Natural killer cell (primary cell): ENCODE measurements at regions of chr3 and their contacts with region 1.

Region 1: DNA sequence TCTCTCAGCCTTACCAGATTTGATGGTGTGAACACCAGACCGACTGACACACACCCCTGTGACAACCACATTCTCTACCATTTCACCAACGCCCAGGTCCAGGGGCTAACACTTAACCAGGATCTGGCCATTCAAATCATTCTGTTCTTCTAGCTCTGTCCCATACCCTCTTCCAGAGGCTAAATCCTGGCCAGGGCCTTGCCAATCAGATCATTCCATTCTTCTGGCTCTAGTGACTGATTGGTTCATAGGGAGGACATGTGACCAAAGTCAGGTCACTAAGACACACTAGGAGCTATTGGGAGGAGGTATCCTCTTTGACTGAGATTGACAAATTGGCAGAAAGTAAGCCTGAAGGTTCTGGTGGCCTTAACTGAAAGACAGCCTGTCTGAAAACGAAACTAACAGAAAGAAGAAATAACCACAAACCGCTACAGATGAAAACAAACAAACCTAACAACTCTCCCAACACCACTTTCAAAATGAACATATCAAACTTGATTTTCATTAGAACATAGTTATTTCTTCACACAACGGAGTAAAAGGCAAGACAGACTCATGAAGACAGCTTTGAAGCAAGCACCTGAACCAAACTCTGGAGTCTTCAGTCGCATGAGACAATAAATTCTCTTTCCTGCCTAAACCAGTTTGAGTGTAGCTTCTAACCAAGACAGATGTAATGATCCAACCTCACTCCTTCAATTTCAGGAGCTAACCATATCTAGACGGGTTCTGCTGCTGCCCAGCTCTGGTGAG is 68.5 kb downstream of the TRANK1 start:
- DNase-seq: peak; percentile 49 to 81
- ATAC-seq: peak; percentile 81 to 88 (median 88)
- H3K4me3 ChIP-seq: peak overlapping the region; percentile 5
- H3K4me3 Mint-ChIP-seq: peak overlapping the region; percentile 86
- H3K27ac ChIP-seq: peak overlapping the region; percentile 95
- H3K27ac Mint-ChIP-seq: peak overlapping the region; percentile 93 to 95
- H3K4me1 ChIP-seq: peaks cover 34% of the 10 kb centered on the region
- H3K4me1 Mint-ChIP-seq: peaks cover 56 to 66% of the 10 kb centered on the region in 2 donors
- H3K27me3 ChIP-seq: no peaks in the 10 kb centered on the region
- H3K27me3 Mint-ChIP-seq: no peaks in the 10 kb centered on the region
- CTCF ChIP-seq: no peak

Region 2: GRCh38 chr3:36843065-36844051 is 33.0 kb before region 1 on chr3:
- intact Hi-C with region 1: loop called (anchors 1 kb)
- DNase-seq: peak; percentile 37 to 70
- ATAC-seq: peak; percentile 77 to 85 (median 81)
- H3K4me3 ChIP-seq: no peak overlapping the region
- H3K4me3 Mint-ChIP-seq: peak overlapping the region; percentile 75
- H3K27ac ChIP-seq: peak overlapping the region; percentile 49
- H3K27ac Mint-ChIP-seq: peak overlapping the region; percentile 84 to 90
- H3K4me1 ChIP-seq: peaks cover 26% of the 10 kb centered on the region
- H3K4me1 Mint-ChIP-seq: peaks cover 57 to 61% of the 10 kb centered on the region in 2 donors
- H3K27me3 ChIP-seq: no peaks in the 10 kb centered on the region
- H3K27me3 Mint-ChIP-seq: no peaks in the 10 kb centered on the region
- CTCF ChIP-seq: peak; percentile 70

Region 3: GRCh38 chr3:36911990-36912804 is 35.8 kb after region 1 on chr3:
- intact Hi-C with region 1: loop called (anchors 1 kb)
- DNase-seq: peak in 1 of 2 donors; percentile 76
- ATAC-seq: peak; percentile 73 to 88 (median 76)
- H3K4me3 ChIP-seq: peak overlapping the region; percentile 6
- H3K4me3 Mint-ChIP-seq: peak overlapping the region; percentile 56
- H3K27ac ChIP-seq: peak overlapping the region; percentile 89
- H3K27ac Mint-ChIP-seq: peak overlapping the region; percentile 77 to 83
- H3K4me1 ChIP-seq: peaks cover 30% of the 10 kb centered on the region
- H3K4me1 Mint-ChIP-seq: peaks cover 29 to 37% of the 10 kb centered on the region in 2 donors
- H3K27me3 ChIP-seq: no peaks in the 10 kb centered on the region
- H3K27me3 Mint-ChIP-seq: no peaks in the 10 kb centered on the region
- CTCF ChIP-seq: no peak

Region 4: GRCh38 chr3:36944012-36944640 is 67.8 kb after region 1 on chr3:
- intact Hi-C with region 1: loop called (anchors 1 kb)
- DNase-seq: peak; percentile 44 to 53
- ATAC-seq: peak; percentile 37 to 53 (median 37)
- H3K4me3 ChIP-seq: peak overlapping the region; percentile 82
- H3K4me3 Mint-ChIP-seq: peak overlapping the region; percentile 83
- H3K27ac ChIP-seq: peak overlapping the region; percentile 8
- H3K27ac Mint-ChIP-seq: peak overlapping the region; percentile 41 to 81
- H3K4me1 ChIP-seq: peaks cover 18% of the 10 kb centered on the region
- H3K4me1 Mint-ChIP-seq: peaks cover 6 to 23% of the 10 kb centered on the region in 2 donors
- H3K27me3 ChIP-seq: no peaks in the 10 kb centered on the region
- H3K27me3 Mint-ChIP-seq: no peaks in the 10 kb centered on the region
- CTCF ChIP-seq: no peak

Region 5: GRCh38 chr3:36957862-36958686 is 81.7 kb after region 1 on chr3:
- intact Hi-C with region 1: loop called (anchors 5 kb)
- DNase-seq: peak in 1 of 2 donors; percentile 27
- ATAC-seq: peak; percentile 34 to 61 (median 38)
- H3K4me3 ChIP-seq: no peak overlapping the region
- H3K4me3 Mint-ChIP-seq: no peak overlapping the region
- H3K27ac ChIP-seq: no peak overlapping the region
- H3K27ac Mint-ChIP-seq: peak overlapping the region in 1 of 2 donors; percentile 80
- H3K4me1 ChIP-seq: no peaks in the 10 kb centered on the region
- H3K4me1 Mint-ChIP-seq: peaks cover 0 to 11% of the 10 kb centered on the region in 2 donors
- H3K27me3 ChIP-seq: no peaks in the 10 kb centered on the region
- H3K27me3 Mint-ChIP-seq: no peaks in the 10 kb centered on the region
- CTCF ChIP-seq: no peak

Region 6: DNA sequence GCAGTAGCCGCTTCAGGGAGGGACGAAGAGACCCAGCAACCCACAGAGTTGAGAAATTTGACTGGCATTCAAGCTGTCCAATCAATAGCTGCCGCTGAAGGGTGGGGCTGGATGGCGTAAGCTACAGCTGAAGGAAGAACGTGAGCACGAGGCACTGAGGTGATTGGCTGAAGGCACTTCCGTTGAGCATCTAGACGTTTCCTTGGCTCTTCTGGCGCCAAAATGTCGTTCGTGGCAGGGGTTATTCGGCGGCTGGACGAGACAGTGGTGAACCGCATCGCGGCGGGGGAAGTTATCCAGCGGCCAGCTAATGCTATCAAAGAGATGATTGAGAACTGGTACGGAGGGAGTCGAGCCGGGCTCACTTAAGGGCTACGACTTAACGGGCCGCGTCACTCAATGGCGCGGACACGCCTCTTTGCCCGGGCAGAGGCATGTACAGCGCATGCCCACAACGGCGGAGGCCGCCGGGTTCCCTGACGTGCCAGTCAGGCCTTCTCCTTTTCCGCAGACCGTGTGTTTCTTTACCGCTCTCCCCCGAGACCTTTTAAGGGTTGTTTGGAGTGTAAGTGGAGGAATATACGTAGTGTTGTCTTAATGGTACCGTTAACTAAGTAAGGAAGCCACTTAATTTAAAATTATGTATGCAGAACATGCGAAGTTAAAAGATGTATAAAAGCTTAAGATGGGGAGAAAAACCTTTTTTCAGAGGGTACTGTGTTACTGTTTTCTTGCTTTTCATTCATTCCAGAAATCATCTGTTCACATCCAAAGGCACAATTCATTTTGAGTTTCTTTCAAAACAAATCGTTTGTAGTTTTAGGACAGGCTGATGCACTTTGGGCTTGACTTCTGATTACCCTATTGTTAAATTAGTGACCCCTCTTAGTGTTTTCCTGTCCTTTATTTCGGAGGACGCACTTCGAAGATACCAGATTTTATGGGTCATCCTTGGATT is 117.2 kb after region 1 on chr3 and contains the start of gene MLH1:
- intact Hi-C with region 1: loop called (anchors 1 kb)
- DNase-seq: peak; percentile 96 to 97
- ATAC-seq: peak; percentile 83 to 94 (median 84)
- H3K4me3 ChIP-seq: peak within 1 kb of the TSS; percentile 68
- H3K4me3 Mint-ChIP-seq: no peak within 1 kb of the TSS
- H3K27ac ChIP-seq: peak within 1 kb of the TSS; percentile 97
- H3K27ac Mint-ChIP-seq: no peak within 1 kb of the TSS
- H3K4me1 ChIP-seq: peaks cover 17% of the 10 kb centered on the region
- H3K4me1 Mint-ChIP-seq: peaks cover 20 to 25% of the 10 kb centered on the region in 2 donors
- H3K27me3 ChIP-seq: no peaks in the 10 kb centered on the region
- H3K27me3 Mint-ChIP-seq: no peaks in the 10 kb centered on the region
- CTCF ChIP-seq: no peak
- total RNA-seq, gene MLH1: 26.9 to 42.6 (median 27.3) TPM